Panc1 (cell line): ENCODE measurements at regions of chr5 and their contacts with region 1.

Region 1: DNA sequence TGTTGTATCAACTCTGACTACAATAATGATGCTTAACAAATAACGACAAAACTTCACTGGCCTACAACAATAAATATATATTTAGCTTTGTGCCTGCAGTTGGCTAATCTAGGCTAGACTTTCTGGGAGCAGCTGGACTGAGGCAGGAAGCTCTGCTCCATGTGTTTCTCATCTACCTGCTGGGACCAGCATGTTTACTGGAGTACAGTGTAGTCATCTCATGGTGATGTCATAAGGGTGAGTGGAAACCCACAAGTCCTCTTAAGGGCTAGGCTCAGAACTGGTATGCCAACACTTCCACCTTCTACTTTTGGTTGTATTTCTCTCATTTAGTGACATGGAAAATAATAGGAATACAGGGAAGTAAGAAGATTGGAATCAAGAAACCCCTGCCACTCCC is 85.7 kb upstream of the NIPBL start:
- DNase-seq: no peak
- ATAC-seq: no peak
- H3K4me3 ChIP-seq: no peak overlapping the region
- H3K27ac ChIP-seq: no peak overlapping the region
- H3K4me1 ChIP-seq: no peaks in the 10 kb centered on the region
- H3K27me3 ChIP-seq: peaks cover 6% of the 10 kb centered on the region; the same call in 1 of the 2 replicates
- CTCF ChIP-seq: no peak

Region 2: GRCh38 chr5:36744773-36745589 is 45.9 kb before region 1 on chr5:
- CTCF ChIA-PET with region 1: no interaction called
- POLR2A ChIA-PET with region 1: no interaction called
- in situ Hi-C with region 1: no loop called
- intact Hi-C with region 1: no loop called
- DNase-seq: no peak
- ATAC-seq: peak; percentile 90
- H3K4me3 ChIP-seq: peak overlapping the region; percentile 57 to 80
- H3K27ac ChIP-seq: no peak overlapping the region
- H3K4me1 ChIP-seq: 0 out of 2 replicates have a peak, but pooled peaks cover 3% of the 10 kb centered on the region
- H3K27me3 ChIP-seq: peaks cover 37% of the 10 kb centered on the region
- CTCF ChIP-seq: peak; percentile 54

Region 3: GRCh38 chr5:36777105-36777757 is 13.6 kb before region 1 on chr5:
- CTCF ChIA-PET with region 1: no interaction called
- POLR2A ChIA-PET with region 1: interaction called, 11 read pairs
- in situ Hi-C with region 1: no loop called
- intact Hi-C with region 1: no loop called
- DNase-seq: no peak
- ATAC-seq: 0 out of 2 replicates have a peak, but pooled peaks have one; percentile 65
- H3K4me3 ChIP-seq: no peak overlapping the region
- H3K27ac ChIP-seq: no peak overlapping the region
- H3K4me1 ChIP-seq: no peaks in the 10 kb centered on the region
- H3K27me3 ChIP-seq: peaks cover 3% of the 10 kb centered on the region; the same call in 1 of the 2 replicates
- CTCF ChIP-seq: peak; percentile 57

Region 4: GRCh38 chr5:36944607-36945225 is 153.9 kb after region 1 on chr5:
- CTCF ChIA-PET with region 1: no interaction called
- POLR2A ChIA-PET with region 1: interaction called, 10 read pairs
- in situ Hi-C with region 1: no loop called
- intact Hi-C with region 1: no loop called
- DNase-seq: peak; percentile 41
- ATAC-seq: no peak
- H3K4me3 ChIP-seq: no peak overlapping the region
- H3K27ac ChIP-seq: no peak overlapping the region
- H3K4me1 ChIP-seq: peaks cover 19% of the 10 kb centered on the region
- H3K27me3 ChIP-seq: no peaks in the 10 kb centered on the region
- CTCF ChIP-seq: peak; percentile 64; the same call in 1 of the 2 replicates